Heart right ventricle (tissue), 16 donors: ENCODE measurements at regions of chr11 and their contacts with region 1.

Region 1: GRCh38 chr11:114180301-114181055 is 115.7 kb upstream of the NNMT start:
- DNase-seq: peak; percentile 46 to 72
- ATAC-seq: peak; percentile 53 to 87 (median 69)
- H3K4me3 ChIP-seq: peak overlapping the region in 7 of 10 donors; percentile 4 to 38 (median 15)
- H3K27ac ChIP-seq: peak overlapping the region; percentile 76 to 97 (median 94)
- H3K4me1 ChIP-seq: peaks cover 33 to 92% (median 84%) of the 10 kb centered on the region in 9 donors
- H3K27me3 ChIP-seq: no peaks in the 10 kb centered on the region
- CTCF ChIP-seq: peak; percentile 17 to 84 (median 72)

Region 2: GRCh38 chr11:114036156-114036811 is 144.2 kb before region 1 on chr11:
- intact Hi-C with region 1: loop called in 6 of 10 experiments (anchors 1 to 10 kb)
- DNase-seq: peak; percentile 84 to 89
- ATAC-seq: peak; percentile 92 to 97 (median 95)
- H3K4me3 ChIP-seq: peak overlapping the region in 9 of 10 donors; percentile 15 to 58 (median 50)
- H3K27ac ChIP-seq: peak overlapping the region in 9 of 10 donors; percentile 23 to 80 (median 67)
- H3K4me1 ChIP-seq: peaks cover 0 to 19% (median 13%) of the 10 kb centered on the region in 9 donors
- H3K27me3 ChIP-seq: no peaks in the 10 kb centered on the region
- CTCF ChIP-seq: peak; percentile 70 to 98 (median 95)

Region 3: GRCh38 chr11:114091516-114092397 is 88.7 kb before region 1 on chr11:
- intact Hi-C with region 1: no loop called
- DNase-seq: no peak
- ATAC-seq: peak in 4 of 8 donors; percentile 3 to 32 (median 22)
- H3K4me3 ChIP-seq: no peak overlapping the region
- H3K27ac ChIP-seq: peak overlapping the region in 9 of 10 donors; percentile 21 to 96 (median 59)
- H3K4me1 ChIP-seq: peaks cover 53 to 98% (median 90%) of the 10 kb centered on the region in 9 donors
- H3K27me3 ChIP-seq: no peaks in the 10 kb centered on the region
- CTCF ChIP-seq: no peak

Region 4: DNA sequence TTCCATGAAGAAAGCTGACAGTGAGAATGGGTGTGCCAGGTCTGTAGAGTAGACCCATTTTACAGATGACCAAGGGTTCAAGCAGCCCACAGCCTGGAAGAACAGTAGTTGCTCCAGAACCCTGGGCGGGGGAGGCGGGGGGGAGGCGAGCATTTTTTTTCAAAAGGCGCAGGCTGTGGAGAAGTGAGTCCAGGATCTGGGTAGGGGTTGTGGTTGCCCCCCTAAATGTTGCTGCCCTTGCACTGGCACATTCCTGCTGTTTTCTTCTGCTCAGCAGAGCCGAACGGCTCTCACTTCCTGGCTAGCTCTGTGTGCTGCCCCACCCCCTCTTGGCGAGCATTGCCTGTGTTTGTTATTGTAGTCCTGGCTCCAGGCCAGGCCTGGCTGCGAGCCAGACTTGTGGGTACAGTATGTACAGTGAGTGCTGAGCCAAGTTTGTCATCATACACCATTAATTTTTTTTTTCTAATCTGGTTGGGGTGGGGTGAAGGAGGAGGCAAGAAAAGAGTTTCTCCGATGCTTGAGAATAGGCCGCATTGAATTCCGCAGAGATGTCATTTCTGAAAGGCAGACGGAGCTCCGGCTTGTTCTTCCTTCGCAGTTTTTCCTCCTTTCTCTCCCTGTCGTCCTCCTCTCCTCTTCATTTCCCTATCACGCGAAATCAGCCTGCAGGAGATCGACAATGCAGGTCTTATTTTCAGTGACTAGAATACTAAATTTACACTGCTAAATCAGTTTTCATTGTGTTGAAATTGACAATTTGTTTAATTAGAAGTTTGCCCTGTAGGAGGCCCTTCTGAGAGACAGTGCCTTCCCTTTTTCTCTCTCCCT is 20.5 kb before region 1 on chr11:
- intact Hi-C with region 1: loop called in 4 of 10 experiments (anchors 1 to 2 kb)
- DNase-seq: peak; percentile 99
- ATAC-seq: peak; percentile 61 to 92 (median 84)
- H3K4me3 ChIP-seq: peak overlapping the region in 9 of 10 donors; percentile 1 to 47 (median 32)
- H3K27ac ChIP-seq: peak overlapping the region; percentile 87 to 100 (median 97)
- H3K4me1 ChIP-seq: peaks cover 79 to 99% (median 95%) of the 10 kb centered on the region in 9 donors
- H3K27me3 ChIP-seq: no peaks in the 10 kb centered on the region
- CTCF ChIP-seq: no peak

Region 5: GRCh38 chr11:114197799-114198500 is 17.5 kb after region 1 on chr11:
- intact Hi-C with region 1: loop called in 1 of 10 experiments (anchors 2 kb)
- DNase-seq: peak; percentile 70 to 80
- ATAC-seq: peak; percentile 81 to 92 (median 86)
- H3K4me3 ChIP-seq: peak overlapping the region in 2 of 10 donors; percentile 5 to 23
- H3K27ac ChIP-seq: peak overlapping the region; percentile 83 to 96 (median 88)
- H3K4me1 ChIP-seq: peaks cover 57 to 100% (median 96%) of the 10 kb centered on the region in 9 donors
- H3K27me3 ChIP-seq: no peaks in the 10 kb centered on the region
- CTCF ChIP-seq: no peak

Region 6: GRCh38 chr11:114257621-114258558 is 77.4 kb after region 1 on chr11:
- intact Hi-C with region 1: loop called in 5 of 10 experiments (anchors 5 kb)
- DNase-seq: peak; percentile 53 to 68
- ATAC-seq: peak; percentile 49 to 76 (median 62)
- H3K4me3 ChIP-seq: peak overlapping the region in 7 of 10 donors; percentile 6 to 36 (median 25)
- H3K27ac ChIP-seq: peak overlapping the region; percentile 28 to 87 (median 73)
- H3K4me1 ChIP-seq: peaks cover 20 to 60% (median 56%) of the 10 kb centered on the region in 9 donors
- H3K27me3 ChIP-seq: no peaks in the 10 kb centered on the region
- CTCF ChIP-seq: peak in 7 of 9 donors; percentile 13 to 57 (median 45)